Left ventricle myocardium inferior (tissue), 1 donor: ENCODE measurements at regions of chr18 and their contacts with region 1.

Region 1: DNA sequence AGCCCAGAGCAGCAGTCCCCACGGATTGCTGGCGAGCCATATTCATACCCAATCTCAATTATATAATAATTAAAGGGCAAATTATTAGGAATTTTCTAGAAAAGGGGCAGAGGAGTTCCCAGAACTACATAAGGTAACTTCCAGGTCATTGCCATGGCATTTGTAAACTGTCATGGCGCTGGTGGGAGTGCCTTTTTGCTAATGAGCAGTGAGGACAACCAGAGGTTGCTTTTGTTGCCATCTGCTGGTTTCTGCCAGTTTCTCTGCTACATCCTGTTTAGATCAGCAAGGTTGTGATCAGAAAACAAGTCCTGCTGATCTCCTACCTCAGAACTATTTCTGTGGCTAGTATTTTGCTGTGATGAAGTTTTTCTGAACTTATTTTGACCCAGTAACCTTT is 159.8 kb upstream of the PIEZO2 start:
- DNase-seq: no peak
- H3K4me3 ChIP-seq: no peak overlapping the region
- H3K27ac ChIP-seq: no peak overlapping the region
- H3K4me1 ChIP-seq: peaks cover 2% of the 10 kb centered on the region
- H3K27me3 ChIP-seq: no peaks in the 10 kb centered on the region
- CTCF ChIP-seq: no peak

Region 2: GRCh38 chr18:11104307-11104706 is 204.9 kb before region 1 on chr18:
- intact Hi-C with region 1: loop called (anchors 5 kb)
- DNase-seq: no peak
- H3K4me3 ChIP-seq: no peak overlapping the region
- H3K27ac ChIP-seq: no peak overlapping the region
- H3K4me1 ChIP-seq: no peaks in the 10 kb centered on the region
- H3K27me3 ChIP-seq: peaks cover 31% of the 10 kb centered on the region
- CTCF ChIP-seq: no peak